Mammary epithelial cell (primary cell): ENCODE measurements at regions of chr7 and their contacts with region 1.

Region 1: GRCh38 chr7:39894904-39895303 is 55.2 kb upstream of the CDK13 start:
- DNase-seq: peak; percentile 32
- H3K4me3 ChIP-seq: no peak overlapping the region
- H3K27ac ChIP-seq: no peak overlapping the region
- H3K4me1 ChIP-seq: no peaks in the 10 kb centered on the region
- H3K27me3 ChIP-seq: no peaks in the 10 kb centered on the region
- CTCF ChIP-seq: no peak

Region 2: GRCh38 chr7:40047661-40048060 is 152.8 kb after region 1 on chr7:
- CTCF ChIA-PET with region 1: interaction called, 11 read pairs
- dilution Hi-C with region 1: no loop called
- in situ Hi-C with region 1: loop called (anchors 5 to 10 kb)
- intact Hi-C with region 1: loop called (anchors 1 kb)
- DNase-seq: no peak
- H3K4me3 ChIP-seq: no peak overlapping the region
- H3K27ac ChIP-seq: no peak overlapping the region
- H3K4me1 ChIP-seq: no peaks in the 10 kb centered on the region
- H3K27me3 ChIP-seq: no peaks in the 10 kb centered on the region
- CTCF ChIP-seq: peak in 1 of 2 donors; percentile 31

Region 3: GRCh38 chr7:40057292-40057691 is 162.4 kb after region 1 on chr7:
- CTCF ChIA-PET with region 1: interaction called, 11 read pairs
- dilution Hi-C with region 1: no loop called
- in situ Hi-C with region 1: loop called in 1 of 2 experiments (anchors 10 kb)
- intact Hi-C with region 1: loop called (anchors 1 kb)
- DNase-seq: peak; percentile 11
- H3K4me3 ChIP-seq: no peak overlapping the region
- H3K27ac ChIP-seq: no peak overlapping the region
- H3K4me1 ChIP-seq: no peaks in the 10 kb centered on the region
- H3K27me3 ChIP-seq: no peaks in the 10 kb centered on the region
- CTCF ChIP-seq: no peak

Region 4: GRCh38 chr7:40134428-40135316 is 239.8 kb after region 1 on chr7 and contains the starts of genes MPLKIP and SUGCT:
- CTCF ChIA-PET with region 1: no interaction called
- dilution Hi-C with region 1: no loop called
- in situ Hi-C with region 1: no loop called
- intact Hi-C with region 1: loop called (anchors 1 kb)
- DNase-seq: peak; percentile 85
- H3K4me3 ChIP-seq: peak within 1 kb of the TSS; percentile 72 to 96 (median 80)
- H3K27ac ChIP-seq: peak within 1 kb of the TSS; percentile 88
- H3K4me1 ChIP-seq: peaks cover 3% of the 10 kb centered on the region
- H3K27me3 ChIP-seq: no peaks in the 10 kb centered on the region
- CTCF ChIP-seq: peak; percentile 65 to 87
- total RNA-seq, gene MPLKIP: 17.8 to 45.4 TPM
- total RNA-seq, gene SUGCT: 12.3 to 138 TPM